ENCODE measurements at regions of chr1 and their contacts with region 1.

Region 1: DNA sequence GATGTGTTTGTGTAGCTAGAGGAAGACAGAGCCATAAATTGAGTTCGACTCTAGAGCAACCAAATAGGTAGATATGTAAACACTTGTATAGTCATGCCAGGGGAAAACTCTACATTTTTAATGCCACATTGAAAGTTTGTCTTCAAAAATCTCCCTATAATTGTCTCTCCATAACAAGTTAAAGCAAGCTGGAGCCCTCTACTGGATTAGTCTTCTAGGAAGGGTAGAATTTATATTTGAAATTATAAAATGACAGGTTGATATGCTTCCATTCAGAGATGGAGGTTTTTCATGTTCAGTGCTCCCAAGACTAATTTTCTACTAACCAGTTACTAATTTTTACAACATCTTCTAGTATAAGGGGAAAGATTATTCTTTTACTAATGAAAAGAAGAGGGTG is 13.1 kb upstream of the COL24A1 start:
- DNase-seq: no peak
- H3K4me3 Mint-ChIP-seq: no peak overlapping the region
- H3K27ac Mint-ChIP-seq: no peak overlapping the region
- H3K4me1 Mint-ChIP-seq: no peaks in the 10 kb centered on the region
- H3K27me3 Mint-ChIP-seq: no peaks in the 10 kb centered on the region
- CTCF ChIP-seq: no peak

Region 2: DNA sequence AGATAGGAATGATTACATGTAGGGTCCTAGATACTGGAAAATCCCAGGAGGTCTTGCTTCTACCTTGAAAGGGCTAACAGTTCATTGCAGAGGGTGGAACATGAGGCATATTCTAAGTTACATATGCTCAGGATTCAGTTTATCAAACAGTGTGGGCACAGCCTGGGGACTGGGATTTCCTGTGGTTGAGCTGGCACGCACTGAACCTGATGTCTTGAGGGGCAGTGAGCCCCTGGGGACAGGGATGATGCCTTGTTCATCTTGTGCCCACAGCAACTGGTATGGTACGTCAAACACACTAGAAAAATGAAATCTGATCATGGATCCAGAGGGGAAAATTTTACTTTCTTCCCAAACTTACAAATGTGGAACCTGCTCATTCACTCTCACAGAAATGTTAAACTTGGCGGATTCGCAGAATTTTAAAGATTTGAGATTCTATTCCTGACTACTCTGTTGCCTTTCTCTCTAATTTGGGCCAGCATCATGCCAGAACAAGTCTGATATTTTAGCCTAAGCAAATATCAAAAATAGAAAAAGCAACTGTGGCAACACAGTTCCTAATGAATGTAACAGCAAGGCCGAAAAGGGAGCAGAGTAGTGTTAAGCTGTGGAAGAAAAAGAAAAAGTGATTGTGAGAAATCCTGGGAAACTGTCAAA is 55.2 kb after region 1 on chr1:
- CTCF ChIA-PET with region 1: interaction called, 3 read pairs
- POLR2A ChIA-PET with region 1: no interaction called
- intact Hi-C with region 1: loop called (anchors 5 kb)
- DNase-seq: no peak
- H3K4me3 Mint-ChIP-seq: no peak overlapping the region
- H3K27ac Mint-ChIP-seq: no peak overlapping the region
- H3K4me1 Mint-ChIP-seq: no peaks in the 10 kb centered on the region
- H3K27me3 Mint-ChIP-seq: no peaks in the 10 kb centered on the region
- CTCF ChIP-seq: no peak

Region 3: DNA sequence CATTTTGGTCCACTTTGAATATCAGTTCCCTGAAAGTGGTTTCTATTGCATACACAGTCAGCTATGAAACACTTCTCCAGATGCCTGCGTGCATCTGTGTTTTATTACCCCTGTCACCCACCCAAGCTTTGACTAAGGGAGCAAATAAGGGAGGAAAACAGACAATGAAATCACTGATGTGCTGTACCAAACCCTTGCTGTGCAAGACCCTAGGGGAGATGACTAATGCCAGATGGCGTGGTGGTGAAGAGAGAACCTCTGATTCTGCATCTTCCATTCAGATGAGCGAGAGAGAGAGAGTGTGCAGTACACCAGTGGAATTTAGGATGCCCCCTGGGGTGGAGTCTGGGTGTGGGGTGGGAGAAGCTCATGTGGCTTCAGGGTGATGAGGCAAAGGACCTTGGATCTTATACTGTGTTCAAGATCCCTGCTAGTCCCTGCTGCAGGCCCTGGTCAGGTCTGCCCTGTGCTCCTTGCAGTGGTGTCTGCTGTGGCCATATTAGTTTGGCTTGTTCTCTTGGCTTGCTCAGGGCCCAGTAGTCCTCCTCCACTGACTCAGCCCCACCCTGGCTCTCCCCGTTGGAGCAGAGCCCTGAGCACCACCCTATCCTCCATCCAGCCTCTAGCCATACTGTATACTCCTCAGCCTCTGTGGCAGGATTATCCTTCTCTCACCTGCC is 317.6 kb after region 1 on chr1:
- CTCF ChIA-PET with region 1: no interaction called
- POLR2A ChIA-PET with region 1: no interaction called
- intact Hi-C with region 1: no loop called
- DNase-seq: peak; percentile 18
- H3K4me3 Mint-ChIP-seq: no peak overlapping the region
- H3K27ac Mint-ChIP-seq: peak overlapping the region; percentile 21
- H3K4me1 Mint-ChIP-seq: no peaks in the 10 kb centered on the region
- H3K27me3 Mint-ChIP-seq: no peaks in the 10 kb centered on the region
- CTCF ChIP-seq: no peak

Measured in MCF 10A (cell line).